Aorta (tissue), 5 donors: ENCODE measurements at regions of chr2 and their contacts with region 1.

Region 1: DNA sequence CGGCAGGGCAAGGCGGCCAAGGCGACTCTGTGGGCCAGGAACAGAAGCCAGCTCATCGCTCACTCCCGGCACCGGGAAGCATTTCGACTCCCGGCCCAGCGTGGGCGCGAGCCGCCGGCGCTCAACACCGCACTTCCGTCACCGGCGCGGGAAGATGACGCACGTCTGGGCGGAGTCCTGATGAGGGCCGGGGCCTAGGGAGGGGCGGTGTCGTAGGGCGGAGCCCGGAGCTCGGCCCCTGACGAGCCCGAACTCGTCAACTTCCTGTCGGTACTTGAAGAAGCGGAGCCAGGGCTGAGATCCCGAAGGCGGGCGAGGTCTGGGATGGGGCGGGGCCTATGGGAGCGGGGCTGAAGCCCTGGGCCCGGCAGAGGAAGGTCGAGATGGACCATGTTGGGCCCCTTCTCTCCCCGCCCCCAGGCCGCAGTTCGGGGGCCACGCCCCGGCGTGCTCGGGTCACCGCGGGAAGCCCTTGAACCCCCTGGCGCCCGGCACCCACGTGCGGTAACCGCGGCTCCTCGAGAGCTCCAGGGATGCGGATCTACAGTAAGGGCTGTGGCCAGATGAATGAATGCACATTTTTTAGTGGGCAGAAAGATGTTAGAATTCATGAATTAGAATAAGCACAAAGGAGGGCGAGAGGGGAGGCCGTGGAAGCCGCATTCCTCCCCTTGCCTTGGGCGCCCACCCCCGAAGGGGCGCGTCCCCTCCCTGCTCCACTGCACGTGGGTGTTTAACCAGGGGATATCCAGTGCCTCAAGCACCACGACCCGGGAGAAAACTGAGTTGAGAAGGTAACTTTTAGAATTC is at the start of gene RNASEH1:
- DNase-seq: peak; percentile 99 to 100
- ATAC-seq: peak; percentile 100
- H3K4me3 ChIP-seq: peak within 1 kb of the TSS; percentile 70 to 77
- H3K27ac ChIP-seq: peak within 1 kb of the TSS; percentile 51 to 87
- H3K4me1 ChIP-seq: no peaks in the 10 kb centered on the region
- H3K27me3 ChIP-seq: no peaks in the 10 kb centered on the region
- total RNA-seq, gene RNASEH1: 19.9 to 20.1 TPM

Region 2: DNA sequence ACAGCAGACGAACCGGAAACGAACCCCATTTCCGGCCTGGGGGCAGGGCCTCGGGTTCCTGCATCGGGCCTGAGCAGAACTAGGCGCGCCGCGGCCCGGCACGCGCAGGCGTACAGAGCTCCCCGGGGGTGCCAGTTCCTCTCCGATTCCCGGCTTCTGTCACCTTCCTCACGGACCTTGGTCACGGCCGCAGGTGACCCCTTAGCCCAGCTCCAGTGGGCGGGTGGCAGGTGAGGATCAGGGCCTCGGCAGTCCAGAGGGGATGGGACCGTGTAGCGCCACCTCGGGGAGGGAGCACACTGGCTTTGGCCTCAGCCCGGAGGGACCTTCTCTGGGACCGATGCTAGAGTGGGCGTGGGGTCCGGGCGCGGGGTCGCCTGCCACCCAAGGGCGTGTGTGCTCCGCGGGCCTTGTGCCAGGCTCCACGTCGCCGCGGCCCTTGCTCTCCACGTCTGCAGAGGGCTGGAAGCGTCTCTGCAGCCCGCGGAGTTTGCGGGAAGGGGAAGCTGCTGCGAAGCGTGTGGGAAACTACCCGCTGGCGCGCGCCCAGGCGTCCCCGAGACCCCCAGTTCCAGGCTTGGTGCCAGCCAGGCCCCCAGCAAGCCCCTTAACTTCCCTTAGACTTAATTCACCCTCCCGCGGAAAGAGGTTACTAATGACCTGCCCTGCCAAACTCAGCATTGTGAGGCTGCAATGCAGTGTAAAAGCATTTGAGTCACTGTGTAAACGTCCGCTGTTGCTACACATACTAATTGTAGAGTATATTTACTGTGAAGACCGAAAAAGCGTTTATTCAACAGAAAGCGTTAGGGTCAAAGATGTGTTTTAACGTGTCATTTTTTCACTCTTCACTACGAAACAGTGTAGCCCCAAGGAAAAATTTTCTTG is 178.5 kb before region 1 on chr2 and contains the start of gene TRAPPC12:
- intact Hi-C with region 1: loop called in 1 of 2 experiments (anchors 5 kb)
- DNase-seq: peak; percentile 93 to 96
- ATAC-seq: peak; percentile 95
- H3K4me3 ChIP-seq: peak within 1 kb of the TSS; percentile 61 to 72
- H3K27ac ChIP-seq: peak within 1 kb of the TSS; percentile 78 to 86
- H3K4me1 ChIP-seq: no peaks in the 10 kb centered on the region
- H3K27me3 ChIP-seq: no peaks in the 10 kb centered on the region
- total RNA-seq, gene TRAPPC12: 83.8 to 125 TPM

Region 3: GRCh38 chr2:3483227-3483985 is 75.0 kb before region 1 on chr2:
- intact Hi-C with region 1: no loop called
- DNase-seq: peak; percentile 55 to 74
- ATAC-seq: no peak
- H3K4me3 ChIP-seq: no peak overlapping the region
- H3K27ac ChIP-seq: no peak overlapping the region
- H3K4me1 ChIP-seq: peaks cover 0 to 4% of the 10 kb centered on the region in 2 donors
- H3K27me3 ChIP-seq: no peaks in the 10 kb centered on the region

Region 4: GRCh38 chr2:3536682-3537632 is 21.5 kb before region 1 on chr2:
- intact Hi-C with region 1: loop called in 1 of 2 experiments (anchors 2 kb)
- DNase-seq: peak; percentile 79 to 80
- ATAC-seq: peak; percentile 78
- H3K4me3 ChIP-seq: peak overlapping the region; percentile 8 to 35
- H3K27ac ChIP-seq: peak overlapping the region; percentile 97 to 98
- H3K4me1 ChIP-seq: no peaks in the 10 kb centered on the region
- H3K27me3 ChIP-seq: no peaks in the 10 kb centered on the region

Region 5: GRCh38 chr2:3575534-3576262 is 17.3 kb after region 1 on chr2:
- intact Hi-C with region 1: loop called (anchors 1 to 2 kb)
- DNase-seq: no peak
- ATAC-seq: peak; percentile 8
- H3K4me3 ChIP-seq: peak overlapping the region; percentile 58 to 77
- H3K27ac ChIP-seq: peak overlapping the region; percentile 30 to 74
- H3K4me1 ChIP-seq: peaks cover 0 to 2% of the 10 kb centered on the region in 2 donors
- H3K27me3 ChIP-seq: no peaks in the 10 kb centered on the region

Region 6: DNA sequence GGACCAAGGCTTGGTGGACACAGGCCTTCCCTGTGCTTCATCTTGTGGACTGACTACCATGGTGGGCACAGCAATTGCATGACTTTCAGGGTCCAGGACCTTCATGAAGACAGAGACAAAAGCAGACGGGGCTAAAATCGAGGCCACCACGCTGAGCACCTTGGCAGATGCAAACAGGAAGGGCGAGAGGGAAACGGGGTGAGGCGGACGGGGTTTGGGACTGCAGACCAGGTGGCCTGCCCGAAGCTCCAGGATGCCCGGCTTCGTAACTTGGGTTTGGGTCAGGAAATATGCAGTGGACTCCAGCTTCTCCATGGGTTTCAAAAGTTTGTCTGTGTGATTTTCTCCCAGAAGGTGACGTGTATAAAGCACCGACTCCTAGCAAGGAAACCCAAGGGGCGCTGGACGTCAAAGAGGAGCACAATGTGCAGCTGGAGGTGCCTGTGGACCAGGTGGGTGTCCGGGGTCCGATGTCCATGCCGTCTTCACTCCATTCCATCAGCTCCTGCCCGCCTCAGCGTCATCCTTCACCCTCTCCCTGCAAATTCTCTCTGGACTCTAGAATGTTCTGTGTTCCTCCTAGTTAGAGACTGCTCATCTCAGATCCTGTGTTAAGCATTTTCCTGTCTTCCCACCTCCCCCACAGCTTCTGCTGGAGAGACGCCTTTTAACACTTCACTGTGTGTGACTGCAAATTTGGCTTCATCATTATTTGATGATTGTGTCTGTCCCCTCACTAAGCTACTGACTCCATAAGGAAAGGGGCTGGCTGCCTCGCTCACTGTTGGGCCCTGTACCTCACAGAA is 210.8 kb after region 1 on chr2:
- intact Hi-C with region 1: no loop called
- DNase-seq: no peak
- ATAC-seq: no peak
- H3K4me3 ChIP-seq: no peak overlapping the region
- H3K27ac ChIP-seq: no peak overlapping the region
- H3K4me1 ChIP-seq: no peaks in the 10 kb centered on the region
- H3K27me3 ChIP-seq: no peaks in the 10 kb centered on the region